ENCODE measurements at regions of chr4 and their contacts with region 1.

Region 1: GRCh38 chr4:101825953-101826352 is 35.4 kb downstream of the BANK1 start:
- DNase-seq: no peak
- H3K4me3 Mint-ChIP-seq: no peak overlapping the region
- H3K27ac Mint-ChIP-seq: no peak overlapping the region
- H3K4me1 Mint-ChIP-seq: no peaks in the 10 kb centered on the region
- H3K27me3 Mint-ChIP-seq: no peaks in the 10 kb centered on the region

Region 2: DNA sequence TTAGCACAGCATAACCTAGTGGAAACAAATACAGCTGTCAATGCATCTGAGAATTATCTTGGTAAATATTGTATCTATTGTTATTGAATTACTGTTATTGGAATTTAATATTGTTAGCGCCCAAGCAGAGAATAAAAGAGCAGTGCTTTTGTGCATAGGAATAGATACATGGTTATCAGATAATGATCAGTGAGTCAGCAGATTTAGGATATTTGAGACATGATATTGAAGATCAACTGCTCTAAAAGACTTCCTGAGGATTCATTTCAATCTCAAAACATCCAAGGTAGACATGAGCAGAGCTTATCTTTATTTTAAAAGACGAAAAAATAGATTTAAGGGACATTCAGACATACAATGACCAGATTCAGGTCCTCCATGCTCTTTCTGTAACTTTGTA is 1865.3 kb before region 1 on chr4:
- intact Hi-C with region 1: loop called (anchors 5 kb)
- DNase-seq: no peak
- H3K4me3 Mint-ChIP-seq: no peak overlapping the region
- H3K27ac Mint-ChIP-seq: no peak overlapping the region
- H3K4me1 Mint-ChIP-seq: peaks cover 3% of the 10 kb centered on the region
- H3K27me3 Mint-ChIP-seq: no peaks in the 10 kb centered on the region

Region 3: GRCh38 chr4:101865501-101866099 is 39.6 kb after region 1 on chr4:
- intact Hi-C with region 1: no loop called
- DNase-seq: no peak
- H3K4me3 Mint-ChIP-seq: no peak overlapping the region
- H3K27ac Mint-ChIP-seq: no peak overlapping the region
- H3K4me1 Mint-ChIP-seq: no peaks in the 10 kb centered on the region
- H3K27me3 Mint-ChIP-seq: peaks cover 2% of the 10 kb centered on the region

Measured in activated CD4-positive, alpha-beta T cell treated with anti-CD3 and anti-CD28 coated beads, Interleukin-2, amount 10 ng/mL, durations not matched to agents 24 days and 14 days (primary cell).